Calu3 (cell line): ENCODE measurements at regions of chr2 and their contacts with region 1.

Region 1: DNA sequence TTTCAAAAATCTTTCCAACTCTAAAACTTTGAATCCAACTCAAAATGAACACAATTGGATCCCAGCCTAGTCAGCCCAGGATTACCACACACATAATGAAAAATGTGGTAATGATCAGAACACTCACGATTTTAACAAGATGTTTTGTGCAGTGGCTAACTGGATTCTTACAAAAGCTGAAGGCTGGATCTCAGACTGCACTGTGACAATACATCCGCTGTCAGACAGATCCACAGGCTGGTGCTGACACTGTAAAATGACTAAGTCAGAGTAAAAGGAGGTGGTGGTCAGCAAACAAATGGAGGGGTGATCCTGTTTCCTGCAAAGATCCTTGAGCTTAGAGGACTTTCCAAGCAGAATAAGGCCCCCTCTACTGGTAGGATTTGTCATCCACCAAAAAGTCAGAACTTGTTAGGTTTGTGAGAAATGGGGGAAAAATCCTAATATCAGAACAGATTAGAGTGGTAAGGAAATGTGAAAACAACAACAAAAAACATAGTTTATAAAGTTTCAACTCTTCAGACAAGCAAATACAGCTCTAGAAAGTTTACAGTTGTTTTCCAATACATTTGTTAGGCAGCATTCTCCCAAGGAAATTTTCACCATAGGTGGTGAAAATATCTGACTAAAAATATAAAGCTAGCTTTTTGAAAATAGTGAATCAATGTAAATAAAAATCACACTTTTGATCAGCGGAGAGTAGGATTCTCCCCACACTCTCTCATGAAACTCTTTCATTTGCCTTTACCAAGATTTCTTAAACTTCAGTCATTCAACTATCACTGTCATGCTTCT is 211.9 kb downstream of the AGPS start:
- DNase-seq: peak; percentile 45
- H3K4me3 Mint-ChIP-seq: no peak overlapping the region
- H3K27ac Mint-ChIP-seq: no peak overlapping the region
- H3K4me1 Mint-ChIP-seq: peaks cover 24% of the 10 kb centered on the region
- H3K27me3 Mint-ChIP-seq: no peaks in the 10 kb centered on the region
- CTCF ChIP-seq: no peak

Region 2: GRCh38 chr2:177489719-177490301 is 114.7 kb before region 1 on chr2:
- CTCF ChIA-PET with region 1: interaction called, 10 read pairs
- intact Hi-C with region 1: loop called (anchors 2 kb)
- DNase-seq: no peak
- H3K4me3 Mint-ChIP-seq: no peak overlapping the region
- H3K27ac Mint-ChIP-seq: no peak overlapping the region
- H3K4me1 Mint-ChIP-seq: no peaks in the 10 kb centered on the region
- H3K27me3 Mint-ChIP-seq: no peaks in the 10 kb centered on the region
- CTCF ChIP-seq: peak; percentile 63

Region 3: DNA sequence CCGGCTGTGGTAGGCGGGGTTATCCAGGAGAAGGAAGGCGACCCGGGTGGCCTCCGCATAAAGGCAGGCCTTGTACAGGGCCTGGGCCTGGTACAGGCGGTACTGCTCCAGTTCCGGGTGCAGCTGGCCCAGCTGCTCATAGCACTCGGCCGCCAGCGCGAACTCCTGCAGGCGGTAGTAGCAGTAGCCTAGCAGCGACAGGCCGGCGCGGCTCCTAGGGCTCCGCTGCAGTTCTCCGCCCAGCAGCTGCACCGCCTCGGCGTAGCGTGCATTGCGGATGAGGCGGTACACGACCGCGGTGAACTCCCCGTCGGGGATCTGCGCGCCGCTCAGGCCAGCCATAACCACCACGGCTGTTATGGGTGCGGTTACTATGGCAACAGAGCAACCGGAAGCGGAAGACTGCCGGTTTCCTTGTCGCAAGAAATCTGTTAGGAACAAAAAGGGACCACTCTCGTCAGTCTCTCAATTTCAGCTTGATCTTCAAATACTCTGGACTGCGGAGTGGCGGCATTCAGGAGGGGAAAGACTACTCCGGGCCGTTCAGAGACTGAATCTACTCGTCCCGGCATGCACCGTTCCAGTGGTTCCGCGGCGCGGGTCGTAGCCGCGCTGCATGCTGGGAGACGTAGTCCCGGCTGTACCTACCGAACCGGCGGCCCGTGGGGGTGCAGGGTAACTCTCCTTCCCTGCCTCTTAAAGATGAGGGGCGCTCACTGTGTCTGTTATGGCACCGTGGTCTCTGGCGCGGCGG is 51.9 kb before region 1 on chr2:
- CTCF ChIA-PET with region 1: interaction called, 3 read pairs
- intact Hi-C with region 1: loop called (anchors 1 kb)
- DNase-seq: peak; percentile 88
- H3K4me3 Mint-ChIP-seq: peak overlapping the region; percentile 94
- H3K27ac Mint-ChIP-seq: peak overlapping the region; percentile 99
- H3K4me1 Mint-ChIP-seq: no peaks in the 10 kb centered on the region
- H3K27me3 Mint-ChIP-seq: no peaks in the 10 kb centered on the region
- CTCF ChIP-seq: no peak

Region 4: DNA sequence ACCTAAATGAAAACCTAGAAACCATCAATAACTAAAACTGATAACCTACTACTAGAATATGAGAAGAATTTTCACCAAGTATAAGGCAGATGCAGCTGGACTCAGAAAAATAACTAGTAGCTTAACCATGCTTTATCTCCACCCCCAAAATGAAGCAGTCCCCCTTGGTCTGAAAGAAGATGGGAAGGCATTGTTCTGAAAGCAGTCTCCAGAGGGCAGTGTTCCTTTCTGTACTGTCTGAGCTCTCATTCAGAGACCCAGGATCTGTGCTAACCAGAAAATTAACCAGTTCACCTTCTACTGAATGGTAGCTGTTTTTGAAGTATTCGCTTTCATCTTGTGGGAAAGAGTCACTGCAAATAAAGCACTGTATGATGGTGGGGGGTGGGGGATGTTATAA is 195.1 kb after region 1 on chr2:
- CTCF ChIA-PET with region 1: no interaction called
- intact Hi-C with region 1: no loop called
- DNase-seq: peak; percentile 22
- H3K4me3 Mint-ChIP-seq: no peak overlapping the region
- H3K27ac Mint-ChIP-seq: no peak overlapping the region
- H3K4me1 Mint-ChIP-seq: no peaks in the 10 kb centered on the region
- H3K27me3 Mint-ChIP-seq: no peaks in the 10 kb centered on the region
- CTCF ChIP-seq: no peak